Activated T-helper 1 cell treated with anti-CD3 and anti-CD28 coated beads, Interleukin-12 subunit alpha, Interleukin-12 subunit beta, Interleukin-2, Interleukin-4 antibody, amounts not matched to agents 30 ng/mL and 10 ng/mL and 1 ng/mL, durations not matched to agents 14 hours and 24 hours and 36 hours (primary cell): ENCODE measurements at regions of chr12 and their contacts with region 1.

Region 1: DNA sequence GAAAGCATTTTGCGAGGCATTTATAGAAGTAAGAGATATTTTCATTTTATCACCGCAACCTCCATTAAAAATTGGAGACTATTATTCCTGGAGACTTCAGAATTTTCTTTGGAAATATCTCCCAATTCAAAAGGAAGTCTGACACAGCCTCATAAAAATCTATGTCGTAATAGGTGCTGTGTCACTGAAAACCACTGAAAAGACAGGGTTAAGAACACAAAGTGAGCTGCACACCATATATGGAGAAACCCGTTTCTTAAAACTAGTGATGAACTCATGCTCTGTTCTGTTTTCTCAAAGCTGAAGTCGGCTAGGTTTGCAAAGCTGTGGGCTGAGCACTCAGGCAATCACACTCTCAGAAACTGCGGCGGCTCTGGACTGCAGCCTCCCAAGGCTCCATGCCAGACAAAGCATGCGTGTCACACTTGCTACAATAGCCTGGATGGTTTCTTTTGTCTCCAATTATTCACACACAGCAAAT is at the start of gene GLIPR1:
- DNase-seq: peak; percentile 70
- H3K4me3 Mint-ChIP-seq: peak within 1 kb of the TSS; percentile 89
- H3K27ac Mint-ChIP-seq: peak within 1 kb of the TSS; percentile 98
- H3K4me1 Mint-ChIP-seq: peaks cover 83% of the 10 kb centered on the region
- H3K27me3 Mint-ChIP-seq: peaks cover 2% of the 10 kb centered on the region
- total RNA-seq, gene GLIPR1: 7.3 and 7.6 TPM in 2 replicates

Region 2: GRCh38 chr12:75120311-75120711 is 360.2 kb before region 1 on chr12:
- intact Hi-C with region 1: no loop called
- DNase-seq: no peak
- H3K4me3 Mint-ChIP-seq: no peak overlapping the region
- H3K27ac Mint-ChIP-seq: no peak overlapping the region
- H3K4me1 Mint-ChIP-seq: no peaks in the 10 kb centered on the region
- H3K27me3 Mint-ChIP-seq: no peaks in the 10 kb centered on the region

Region 3: DNA sequence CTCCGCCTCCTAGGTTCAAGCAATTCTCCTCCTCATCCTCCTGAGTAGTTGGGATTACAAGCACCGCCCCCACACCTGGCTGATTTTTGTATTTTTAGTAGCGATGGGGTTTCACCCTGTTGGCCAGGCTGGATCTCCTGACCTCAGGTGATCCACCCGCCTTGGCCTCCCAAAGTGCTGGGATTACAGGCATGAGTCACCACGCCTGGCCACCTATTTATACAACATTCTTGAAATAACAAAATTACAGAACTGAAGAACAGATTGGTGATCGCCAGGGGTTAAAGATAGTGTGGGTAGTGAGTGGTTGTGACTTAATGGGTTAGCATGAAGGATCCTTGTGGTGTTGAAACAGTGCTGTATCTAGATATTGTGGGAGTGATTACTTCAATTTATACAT is 138.7 kb before region 1 on chr12:
- intact Hi-C with region 1: loop called (anchors 1 kb)
- DNase-seq: no peak
- H3K4me3 Mint-ChIP-seq: no peak overlapping the region
- H3K27ac Mint-ChIP-seq: no peak overlapping the region
- H3K4me1 Mint-ChIP-seq: peaks cover 19% of the 10 kb centered on the region
- H3K27me3 Mint-ChIP-seq: peaks cover 22% of the 10 kb centered on the region

Region 4: GRCh38 chr12:75511116-75512048 is 30.9 kb after region 1 on chr12 and contains the start of gene KRR1:
- intact Hi-C with region 1: loop called (anchors 1 kb)
- DNase-seq: peak; percentile 89
- H3K4me3 Mint-ChIP-seq: peak within 1 kb of the TSS; percentile 97
- H3K27ac Mint-ChIP-seq: peak within 1 kb of the TSS; percentile 98
- H3K4me1 Mint-ChIP-seq: peaks cover 45% of the 10 kb centered on the region
- H3K27me3 Mint-ChIP-seq: peaks cover 3% of the 10 kb centered on the region
- total RNA-seq, gene KRR1: 130 and 137 TPM in 2 replicates

Region 5: DNA sequence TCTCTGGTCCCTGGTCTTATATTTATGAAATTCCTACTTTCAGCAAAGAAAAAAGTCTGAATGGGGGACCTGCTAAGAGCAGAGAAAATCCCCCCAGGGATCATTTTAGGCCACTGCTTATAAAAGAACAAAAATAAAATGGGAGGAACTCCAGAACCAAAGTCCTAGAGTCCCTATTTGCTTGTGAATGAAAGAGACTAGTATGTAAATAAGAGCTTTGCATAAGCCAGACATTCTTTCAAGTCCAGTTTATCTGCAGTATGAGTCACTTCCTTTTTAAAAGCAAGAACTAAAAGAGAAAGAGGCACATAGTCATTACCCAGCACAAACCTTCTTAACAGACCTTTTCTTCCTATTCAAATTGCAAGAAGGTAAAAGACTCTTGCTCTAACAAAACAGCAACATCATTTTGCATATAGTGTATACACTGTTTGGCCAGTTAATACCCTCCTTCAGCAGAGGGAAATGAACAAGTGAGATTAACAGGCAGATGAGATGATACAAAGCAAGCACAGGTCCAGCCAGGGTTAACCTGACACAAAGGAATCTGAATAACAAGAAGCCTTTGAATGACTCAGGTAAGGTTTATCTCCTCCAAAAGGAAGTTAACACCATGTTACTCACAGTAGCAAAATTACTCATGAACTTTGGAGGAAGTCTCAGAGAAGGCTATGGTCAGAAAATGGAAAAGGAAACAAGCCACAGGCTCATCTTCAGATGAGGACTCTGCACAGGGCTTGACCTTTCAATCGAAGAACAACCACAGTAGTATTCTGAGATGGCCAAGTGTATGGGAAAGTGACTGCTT is 463.8 kb after region 1 on chr12:
- intact Hi-C with region 1: loop called (anchors 1 kb)
- DNase-seq: peak; percentile 27
- H3K4me3 Mint-ChIP-seq: peak overlapping the region; percentile 65
- H3K27ac Mint-ChIP-seq: peak overlapping the region; percentile 98
- H3K4me1 Mint-ChIP-seq: peaks cover 30% of the 10 kb centered on the region
- H3K27me3 Mint-ChIP-seq: no peaks in the 10 kb centered on the region

Region 6: DNA sequence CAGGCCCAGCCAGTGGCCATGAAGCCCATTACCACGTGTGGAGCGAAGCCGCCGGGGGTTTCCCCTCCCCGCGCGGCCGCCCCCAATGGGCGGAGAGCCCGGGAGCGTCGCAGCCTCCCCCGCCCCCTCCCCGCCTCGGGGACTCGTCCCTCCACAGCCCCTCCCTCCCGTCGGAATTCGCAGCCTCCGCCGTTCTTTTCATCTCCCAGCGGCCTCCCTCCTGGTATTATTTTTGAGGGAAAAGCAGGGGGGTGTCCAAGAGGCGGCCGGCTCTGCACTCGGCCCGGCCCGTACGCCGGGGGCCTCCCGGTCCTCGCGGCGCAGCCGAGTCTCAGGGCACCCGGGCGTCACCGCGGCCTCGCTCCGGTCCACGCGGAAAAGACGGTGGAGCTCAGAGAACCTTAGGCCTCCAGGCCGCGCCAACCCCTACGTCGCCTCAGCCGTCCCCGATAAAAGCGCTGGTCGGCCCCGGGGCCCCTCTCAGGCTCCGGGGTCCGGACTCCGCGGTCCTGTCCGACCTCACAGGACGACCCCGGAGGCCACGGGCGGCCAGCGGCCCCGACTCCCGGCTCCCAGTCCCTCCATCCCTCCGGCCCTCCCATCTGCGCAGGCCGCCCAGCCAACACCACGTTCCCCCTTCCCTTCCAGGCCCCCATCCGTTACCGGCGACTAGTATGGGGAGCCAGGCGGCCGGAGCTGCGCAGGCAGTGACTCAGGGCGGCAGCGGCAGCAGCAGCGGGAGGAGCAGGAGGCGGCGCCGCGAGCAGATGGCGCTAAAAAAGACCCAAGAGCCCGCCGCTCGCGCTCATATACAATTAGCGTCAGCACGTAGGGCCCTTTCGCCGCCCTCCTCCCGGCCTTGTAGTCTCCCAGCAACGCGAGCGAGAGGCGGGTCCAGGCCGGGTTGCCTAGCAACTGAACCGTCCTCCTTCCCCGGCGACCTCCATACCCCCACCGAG is 603.7 kb after region 1 on chr12 and contains the start of gene NAP1L1:
- intact Hi-C with region 1: loop called (anchors 1 kb)
- DNase-seq: peak; percentile 96
- H3K4me3 Mint-ChIP-seq: peak within 1 kb of the TSS; percentile 100
- H3K27ac Mint-ChIP-seq: peak within 1 kb of the TSS; percentile 100
- H3K4me1 Mint-ChIP-seq: peaks cover 62% of the 10 kb centered on the region
- H3K27me3 Mint-ChIP-seq: no peaks in the 10 kb centered on the region
- total RNA-seq, gene NAP1L1: 584 and 605 TPM in 2 replicates

Region 7: GRCh38 chr12:76455582-76456345 is 975.3 kb after region 1 on chr12:
- intact Hi-C with region 1: loop called (anchors 1 kb)
- DNase-seq: peak; percentile 5
- H3K4me3 Mint-ChIP-seq: no peak overlapping the region
- H3K27ac Mint-ChIP-seq: no peak overlapping the region
- H3K4me1 Mint-ChIP-seq: peaks cover 15% of the 10 kb centered on the region
- H3K27me3 Mint-ChIP-seq: no peaks in the 10 kb centered on the region